Right ventricle myocardium inferior (tissue), 1 donor: ENCODE measurements at regions of chr5 and their contacts with region 1.

Region 1: GRCh38 chr5:148730943-148731861 is 76.9 kb upstream of the HTR4 start:
- DNase-seq: peak; percentile 77
- ATAC-seq: peak; percentile 92

Region 2: GRCh38 chr5:148179234-148179824 is 551.9 kb before region 1 on chr5:
- intact Hi-C with region 1: loop called (anchors 2 kb)
- DNase-seq: no peak
- ATAC-seq: peak; percentile 56

Region 3: DNA sequence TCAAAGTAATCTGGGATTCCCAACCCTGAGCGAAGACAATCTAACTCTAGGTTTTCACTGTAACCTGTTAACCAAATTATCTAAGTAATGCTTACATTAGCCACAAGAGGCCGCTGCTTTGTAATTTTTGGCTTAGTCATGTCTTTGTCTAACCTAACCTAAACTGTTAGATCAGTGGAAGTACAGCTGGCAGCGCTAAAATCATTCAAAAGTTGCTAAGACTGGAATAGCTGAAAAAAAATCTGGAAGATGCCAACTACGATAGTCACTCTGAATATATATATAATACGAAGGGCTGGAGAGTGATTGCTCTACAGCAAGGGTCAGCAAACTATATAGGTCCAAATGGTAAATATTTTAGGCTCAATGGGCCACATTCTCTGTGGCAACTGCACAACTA is 287.2 kb before region 1 on chr5:
- intact Hi-C with region 1: loop called (anchors 1 kb)
- DNase-seq: no peak
- ATAC-seq: peak; percentile 83

Region 4: GRCh38 chr5:149035372-149035790 is 304.2 kb after region 1 on chr5:
- intact Hi-C with region 1: loop called (anchors 1 kb)
- DNase-seq: peak; percentile 86
- ATAC-seq: peak; percentile 79